Dendritic cell treated with granulocyte-macrophage colony-stimulating factor and Interleukin-4, amounts not matched to agents 40 ng/mL and 50 ng/mL, for 4 days (primary cell): ENCODE measurements at regions of chr16 and their contacts with region 1.

Region 1: GRCh38 chr16:79261481-79261940 is 339.0 kb downstream of the MAF start:
- H3K4me3 Mint-ChIP-seq: no peak overlapping the region
- H3K27ac Mint-ChIP-seq: peak overlapping the region; percentile 56
- H3K4me1 Mint-ChIP-seq: peaks cover 68% of the 10 kb centered on the region
- H3K27me3 Mint-ChIP-seq: peaks cover 19% of the 10 kb centered on the region

Region 2: DNA sequence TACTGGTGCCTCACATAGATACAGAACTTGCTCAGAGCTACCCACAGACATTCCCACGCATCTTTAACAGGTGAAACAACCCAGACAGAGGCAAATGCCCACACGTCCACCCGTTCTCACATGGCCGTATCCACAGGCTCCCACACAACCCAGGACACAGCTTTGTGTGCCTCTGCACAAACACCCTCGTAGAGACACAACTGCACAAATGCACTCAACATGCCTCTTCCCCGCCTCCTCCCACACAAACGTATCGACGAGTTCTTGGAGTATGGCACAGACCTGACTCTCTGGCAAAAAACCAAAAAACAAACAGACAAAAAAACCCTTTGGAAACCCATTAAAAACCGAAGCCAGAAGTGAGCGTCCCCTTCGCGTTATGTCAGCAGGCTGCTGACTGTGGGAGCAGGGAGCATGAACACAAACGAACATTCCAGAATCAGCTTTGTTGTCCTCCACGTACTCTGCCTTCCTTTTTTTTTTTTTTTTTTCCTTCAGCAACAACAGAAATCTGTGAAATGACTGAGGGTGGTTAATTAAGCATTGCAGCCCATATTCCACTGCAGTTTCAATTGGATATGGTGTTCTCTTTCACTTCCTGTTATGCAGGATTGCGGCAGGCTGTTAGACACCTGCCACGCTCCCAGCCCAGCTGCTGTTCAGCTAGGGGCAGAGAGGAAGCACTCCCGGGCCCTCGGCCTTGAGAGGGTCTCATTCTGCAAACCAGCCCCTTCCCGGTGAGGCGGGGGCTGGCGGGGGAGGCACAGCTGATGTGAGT is 25.3 kb after region 1 on chr16:
- intact Hi-C with region 1: loop called (anchors 2 kb)
- H3K4me3 Mint-ChIP-seq: peak overlapping the region; percentile 37
- H3K27ac Mint-ChIP-seq: peak overlapping the region; percentile 20
- H3K4me1 Mint-ChIP-seq: peaks cover 30% of the 10 kb centered on the region
- H3K27me3 Mint-ChIP-seq: peaks cover 32% of the 10 kb centered on the region